Activated CD4-positive, alpha-beta memory T cell treated with anti-CD3 and anti-CD28 coated beads for 36 hours (primary cell): ENCODE measurements at regions of chr22 and their contacts with region 1.

Region 1: DNA sequence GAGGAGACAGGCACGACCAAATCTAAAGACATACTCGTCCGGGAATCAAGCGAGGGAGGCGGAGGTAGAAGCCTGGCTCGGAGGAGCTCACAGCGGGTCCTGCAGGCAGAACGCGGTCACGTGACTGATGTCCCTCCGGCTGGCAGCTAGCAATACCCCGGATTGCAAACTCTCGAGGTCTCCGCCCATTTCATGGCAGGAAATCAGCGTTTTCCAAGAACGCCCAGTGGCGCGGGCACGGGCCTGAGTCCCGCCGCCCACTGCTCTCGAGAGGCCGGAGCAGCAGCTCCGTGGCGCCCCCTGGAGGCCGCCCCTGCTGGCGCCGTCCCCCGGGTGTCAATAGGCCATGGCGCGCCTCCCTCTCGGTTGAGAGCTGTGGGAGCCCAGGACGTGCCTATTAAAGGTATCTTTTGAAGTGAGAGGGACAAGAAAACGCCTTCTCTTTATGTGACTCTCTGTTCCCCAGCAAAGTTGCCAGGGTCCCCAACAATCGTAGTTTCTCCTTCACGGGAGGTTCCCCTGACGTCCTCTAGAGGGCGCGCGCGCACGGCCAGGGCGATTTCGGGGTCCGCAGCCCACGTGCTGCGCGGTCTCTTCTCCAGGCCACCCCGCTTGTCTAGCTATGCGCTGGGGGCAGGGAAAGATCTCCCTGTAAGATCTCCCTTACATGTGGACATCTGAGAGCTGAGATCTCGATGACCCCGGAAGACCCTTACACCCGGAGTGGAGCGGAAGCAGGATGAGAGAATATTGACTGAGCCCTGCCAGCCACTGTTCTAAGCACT is 37.3 kb upstream of the RBFOX2 start:
- DNase-seq: peak; percentile 85
- H3K4me3 Mint-ChIP-seq: peak overlapping the region; percentile 78
- H3K27ac Mint-ChIP-seq: peak overlapping the region; percentile 69
- H3K4me1 Mint-ChIP-seq: peaks cover 4% of the 10 kb centered on the region
- H3K27me3 Mint-ChIP-seq: no peaks in the 10 kb centered on the region

Region 2: DNA sequence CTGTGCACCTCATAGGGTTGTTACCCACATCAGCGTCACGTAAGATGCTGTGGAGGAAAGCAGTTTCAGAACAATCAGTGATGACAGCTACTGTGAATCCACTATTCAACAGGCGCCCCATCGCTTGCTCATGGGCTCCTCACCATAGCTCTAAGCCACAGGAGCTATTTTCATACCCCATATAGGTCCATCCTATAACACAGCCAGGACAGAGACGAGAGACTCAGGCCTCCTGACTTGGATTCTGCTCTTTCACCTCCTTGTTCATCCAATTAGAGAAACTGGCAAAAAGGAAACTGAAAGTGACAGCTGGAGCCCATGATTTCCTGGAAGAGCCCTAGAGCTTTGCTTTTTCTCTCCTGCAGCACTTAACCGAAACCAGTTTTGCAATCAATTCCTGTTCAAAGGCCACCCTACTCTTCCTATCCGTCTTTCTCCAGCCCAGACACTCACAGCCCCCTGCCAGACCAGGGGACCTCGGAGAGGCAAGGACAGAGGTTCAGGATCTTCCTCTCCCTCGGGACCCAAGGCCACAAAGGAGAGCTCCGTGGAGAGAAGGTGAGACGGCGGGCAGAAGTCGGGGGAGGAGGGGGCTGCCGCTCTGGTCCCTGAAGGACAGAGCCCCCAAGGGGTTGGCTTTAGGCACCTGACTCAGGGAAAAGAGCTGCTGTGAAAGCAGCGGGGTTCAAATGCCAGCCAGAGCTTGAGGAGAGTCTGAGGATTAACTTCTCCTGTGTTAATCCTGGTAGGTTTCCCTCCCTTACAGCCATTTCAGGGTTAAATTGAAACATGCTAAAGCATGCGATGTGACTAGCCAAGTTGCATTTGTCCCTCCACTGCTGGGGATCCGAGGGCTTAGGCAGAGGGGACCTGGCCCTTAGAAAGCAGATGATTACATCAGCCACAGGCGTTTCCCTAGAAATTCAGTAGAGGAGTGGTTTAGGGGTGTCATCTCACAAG is 417.6 kb before region 1 on chr22 and contains the start of gene APOL6:
- CTCF ChIA-PET with region 1: interaction called, 17 read pairs
- POLR2A ChIA-PET with region 1: interaction called, 3 read pairs
- intact Hi-C with region 1: no loop called
- DNase-seq: peak; percentile 79
- H3K4me3 Mint-ChIP-seq: peak within 1 kb of the TSS; percentile 99
- H3K27ac Mint-ChIP-seq: peak within 1 kb of the TSS; percentile 100
- H3K4me1 Mint-ChIP-seq: peaks cover 42% of the 10 kb centered on the region
- H3K27me3 Mint-ChIP-seq: no peaks in the 10 kb centered on the region
- total RNA-seq, gene APOL6: 26.7 to 27.7 TPM

Region 3: DNA sequence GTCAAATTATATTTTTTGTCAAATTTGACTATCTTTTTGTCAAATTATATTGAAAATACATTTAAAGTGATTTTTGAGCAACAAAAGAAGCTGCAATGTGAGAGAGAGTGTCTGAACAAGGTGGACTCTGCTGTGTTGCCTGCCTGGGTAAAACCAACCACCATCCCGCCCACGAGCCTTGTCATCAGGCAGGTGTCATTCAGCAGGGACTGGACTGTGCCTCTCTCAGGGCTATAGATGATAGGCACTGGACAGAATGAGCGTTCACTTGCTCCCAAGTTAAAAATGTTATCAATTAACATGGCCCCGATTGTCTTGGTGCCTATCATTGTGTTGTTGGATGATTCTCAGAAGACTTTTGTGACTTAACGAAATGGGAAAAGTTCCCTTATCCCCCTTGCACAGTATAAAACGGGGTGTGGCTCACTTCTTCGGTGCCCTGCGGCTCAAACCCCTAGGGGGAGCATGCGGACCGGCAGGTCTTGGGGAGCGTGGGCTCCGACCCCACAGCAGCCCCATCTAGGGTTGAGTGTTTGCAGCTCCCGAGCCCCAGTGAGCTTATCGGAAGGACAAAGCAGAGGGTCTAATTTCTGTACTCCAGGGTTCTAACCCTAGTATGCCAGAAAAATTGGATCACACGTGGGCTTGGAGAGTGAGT is 346.6 kb before region 1 on chr22:
- CTCF ChIA-PET with region 1: no interaction called
- POLR2A ChIA-PET with region 1: no interaction called
- intact Hi-C with region 1: no loop called
- DNase-seq: no peak
- H3K4me3 Mint-ChIP-seq: no peak overlapping the region
- H3K27ac Mint-ChIP-seq: no peak overlapping the region
- H3K4me1 Mint-ChIP-seq: no peaks in the 10 kb centered on the region
- H3K27me3 Mint-ChIP-seq: no peaks in the 10 kb centered on the region

Region 4: DNA sequence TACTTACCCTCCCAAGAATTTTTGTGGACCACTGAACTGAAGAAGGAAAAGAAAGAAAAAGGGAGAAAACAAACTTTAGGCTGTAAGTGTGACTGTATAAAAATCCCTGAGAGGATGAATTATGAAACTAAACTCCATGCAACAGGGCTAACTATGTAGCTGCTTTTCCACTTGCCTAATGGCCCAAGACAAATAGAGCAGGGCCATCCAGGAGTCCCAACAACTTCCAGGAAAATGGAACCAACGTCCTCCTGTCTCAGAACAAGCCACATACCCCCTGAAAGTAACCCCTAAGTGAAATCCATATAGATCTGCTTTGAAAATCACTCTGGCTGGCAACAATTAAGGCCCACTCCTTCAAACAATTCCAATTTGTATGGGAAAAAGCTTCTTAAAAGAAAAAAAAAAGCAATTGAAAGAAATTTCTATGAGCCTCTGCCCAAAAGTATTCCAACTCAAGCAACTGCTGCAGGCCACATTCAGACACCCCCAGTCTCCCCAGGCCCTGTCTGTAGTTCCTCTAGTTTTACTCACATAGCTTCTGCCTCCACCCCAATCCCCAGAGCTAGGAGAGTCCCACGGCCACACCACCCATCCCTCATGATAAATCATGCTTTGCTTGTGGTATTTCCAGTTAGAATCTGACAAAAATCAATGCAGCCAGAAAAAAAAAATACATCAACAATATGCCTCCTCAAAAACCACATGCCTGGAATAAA is 50.0 kb before region 1 on chr22:
- CTCF ChIA-PET with region 1: interaction called, 13 read pairs
- POLR2A ChIA-PET with region 1: no interaction called
- intact Hi-C with region 1: no loop called
- DNase-seq: no peak
- H3K4me3 Mint-ChIP-seq: no peak overlapping the region
- H3K27ac Mint-ChIP-seq: no peak overlapping the region
- H3K4me1 Mint-ChIP-seq: no peaks in the 10 kb centered on the region
- H3K27me3 Mint-ChIP-seq: peaks cover 8% of the 10 kb centered on the region

Region 5: DNA sequence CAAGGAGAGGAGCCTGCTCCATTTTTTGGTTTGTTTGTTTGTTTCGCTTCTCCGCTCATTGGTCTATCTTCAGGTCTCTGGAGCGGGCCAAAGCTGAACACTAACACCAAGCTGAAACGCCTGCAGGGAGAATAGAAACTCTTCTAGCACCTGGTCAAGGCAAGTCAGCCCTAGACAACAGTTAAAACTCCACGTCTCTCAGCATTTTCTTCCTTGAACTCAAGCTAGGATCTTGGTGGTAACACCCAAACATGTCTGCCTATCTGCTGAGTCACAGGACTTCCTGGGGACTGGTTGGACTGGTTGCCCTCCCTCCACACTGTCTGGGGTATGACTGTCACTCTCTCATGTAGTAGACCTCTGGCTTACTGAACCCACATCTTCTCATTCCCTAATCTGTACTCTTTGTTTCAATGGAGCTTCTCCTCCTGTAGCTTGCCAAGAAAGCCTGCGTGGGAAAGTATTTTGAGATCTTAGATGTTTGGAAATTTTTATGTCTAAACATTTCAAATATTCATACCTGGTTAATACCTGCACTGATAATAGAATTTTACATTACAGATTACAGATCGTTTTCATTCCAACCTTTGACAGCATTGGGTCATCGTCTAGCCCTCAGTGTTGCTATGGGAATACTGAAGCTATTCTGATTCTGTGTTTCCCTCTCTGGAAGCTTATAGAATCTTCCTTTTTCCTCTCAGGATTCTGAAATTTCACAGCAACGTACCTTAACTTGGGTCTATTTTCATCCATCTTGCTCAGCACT is 13.3 kb before region 1 on chr22:
- CTCF ChIA-PET with region 1: interaction called, 53 read pairs
- POLR2A ChIA-PET with region 1: no interaction called
- intact Hi-C with region 1: no loop called
- DNase-seq: peak; percentile 35
- H3K4me3 Mint-ChIP-seq: no peak overlapping the region
- H3K27ac Mint-ChIP-seq: no peak overlapping the region
- H3K4me1 Mint-ChIP-seq: peaks cover 3% of the 10 kb centered on the region
- H3K27me3 Mint-ChIP-seq: peaks cover 8% of the 10 kb centered on the region

Region 6: GRCh38 chr22:36117053-36117554 is 51.1 kb after region 1 on chr22:
- CTCF ChIA-PET with region 1: interaction called, 33 read pairs
- POLR2A ChIA-PET with region 1: no interaction called
- intact Hi-C with region 1: no loop called
- DNase-seq: no peak
- H3K4me3 Mint-ChIP-seq: no peak overlapping the region
- H3K27ac Mint-ChIP-seq: no peak overlapping the region
- H3K4me1 Mint-ChIP-seq: no peaks in the 10 kb centered on the region
- H3K27me3 Mint-ChIP-seq: no peaks in the 10 kb centered on the region

Region 7: GRCh38 chr22:36180038-36180880 is 114.3 kb after region 1 on chr22:
- CTCF ChIA-PET with region 1: interaction called, 41 read pairs
- POLR2A ChIA-PET with region 1: no interaction called
- intact Hi-C with region 1: no loop called
- DNase-seq: peak; percentile 89
- H3K4me3 Mint-ChIP-seq: no peak overlapping the region
- H3K27ac Mint-ChIP-seq: no peak overlapping the region
- H3K4me1 Mint-ChIP-seq: peaks cover 6% of the 10 kb centered on the region
- H3K27me3 Mint-ChIP-seq: no peaks in the 10 kb centered on the region